ENCODE measurements at regions of chr6 and their contacts with region 1.

Region 1: DNA sequence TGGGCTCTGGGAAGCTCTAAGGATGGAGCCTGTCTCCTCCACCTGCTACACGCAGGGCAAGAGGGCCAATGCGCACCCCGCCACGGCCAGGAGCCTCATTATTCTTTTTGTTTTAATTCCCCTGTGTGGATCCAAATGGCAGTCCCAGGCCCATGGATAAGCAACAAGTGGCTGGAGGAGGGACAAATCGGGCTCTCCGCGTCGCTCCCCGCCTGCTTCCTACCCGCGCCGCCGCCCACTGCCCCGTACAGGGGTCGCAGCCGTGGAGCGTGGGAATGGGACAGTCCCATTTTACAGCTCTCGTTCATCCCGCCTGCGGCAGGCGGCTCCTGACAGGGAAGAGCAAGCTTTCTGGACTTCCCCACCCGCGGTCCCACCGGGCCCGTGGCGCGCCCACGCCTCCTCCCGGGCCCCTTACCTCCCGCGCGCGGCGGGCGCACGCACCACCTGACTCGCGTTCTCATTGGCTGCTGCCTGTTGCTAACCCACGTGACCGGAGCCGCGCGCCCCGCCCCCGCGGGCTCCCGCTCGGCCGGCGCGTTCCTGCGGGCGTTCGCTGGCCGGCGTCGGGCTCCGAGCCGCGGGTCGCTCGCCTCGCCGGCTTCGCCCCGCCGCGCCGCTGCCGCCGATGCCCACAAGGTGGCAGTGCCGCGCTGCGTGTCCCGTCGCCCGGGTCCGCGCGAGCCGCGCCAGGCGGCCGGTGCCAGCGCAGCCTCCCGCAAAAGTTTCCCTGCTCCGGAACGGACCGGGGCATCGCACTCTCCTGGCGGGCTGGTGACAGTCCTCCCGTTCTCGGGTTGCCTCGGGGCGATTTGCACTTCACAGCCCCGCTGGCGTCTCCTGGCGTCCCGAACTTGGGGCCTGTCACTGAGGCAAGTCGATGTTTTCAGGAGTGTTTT is 93.3 kb downstream of the CD83 start:
- DNase-seq: peak; percentile 83
- H3K4me3 ChIP-seq: peak overlapping the region; percentile 63 to 81 (median 64)
- H3K27ac ChIP-seq: peak overlapping the region; percentile 72
- H3K4me1 ChIP-seq: peaks cover 21% of the 10 kb centered on the region
- H3K27me3 ChIP-seq: no peaks in the 10 kb centered on the region
- CTCF ChIP-seq: peak; percentile 42 to 55

Region 2: GRCh38 chr6:13863674-13864155 is 347.2 kb before region 1 on chr6:
- CTCF ChIA-PET with region 1: no interaction called
- dilution Hi-C with region 1: no loop called
- in situ Hi-C with region 1: no loop called
- intact Hi-C with region 1: no loop called
- DNase-seq: no peak
- H3K4me3 ChIP-seq: no peak overlapping the region
- H3K27ac ChIP-seq: no peak overlapping the region
- H3K4me1 ChIP-seq: peaks cover 6% of the 10 kb centered on the region
- H3K27me3 ChIP-seq: peaks cover 7% of the 10 kb centered on the region
- CTCF ChIP-seq: no peak

Region 3: GRCh38 chr6:14452567-14453527 is 241.9 kb after region 1 on chr6:
- CTCF ChIA-PET with region 1: no interaction called
- dilution Hi-C with region 1: no loop called
- in situ Hi-C with region 1: loop called in 1 of 2 experiments (anchors 25 kb)
- intact Hi-C with region 1: no loop called
- DNase-seq: no peak
- H3K4me3 ChIP-seq: no peak overlapping the region
- H3K27ac ChIP-seq: no peak overlapping the region
- H3K4me1 ChIP-seq: peaks cover 8% of the 10 kb centered on the region
- H3K27me3 ChIP-seq: no peaks in the 10 kb centered on the region
- CTCF ChIP-seq: no peak

Region 4: GRCh38 chr6:14711056-14711703 is 500.3 kb after region 1 on chr6:
- CTCF ChIA-PET with region 1: no interaction called
- dilution Hi-C with region 1: no loop called
- in situ Hi-C with region 1: loop called in 1 of 2 experiments (anchors 10 kb)
- intact Hi-C with region 1: loop called (anchors 1 kb)
- DNase-seq: peak; percentile 78
- H3K4me3 ChIP-seq: no peak overlapping the region
- H3K27ac ChIP-seq: peak overlapping the region; percentile 67
- H3K4me1 ChIP-seq: peaks cover 49% of the 10 kb centered on the region
- H3K27me3 ChIP-seq: no peaks in the 10 kb centered on the region
- CTCF ChIP-seq: peak; percentile 70 to 86

Region 5: GRCh38 chr6:14799928-14800327 is 589.0 kb after region 1 on chr6:
- CTCF ChIA-PET with region 1: no interaction called
- dilution Hi-C with region 1: no loop called
- in situ Hi-C with region 1: no loop called
- intact Hi-C with region 1: loop called (anchors 5 kb)
- DNase-seq: peak; percentile 71
- H3K4me3 ChIP-seq: no peak overlapping the region
- H3K27ac ChIP-seq: no peak overlapping the region
- H3K4me1 ChIP-seq: peaks cover 17% of the 10 kb centered on the region
- H3K27me3 ChIP-seq: no peaks in the 10 kb centered on the region
- CTCF ChIP-seq: no peak

Region 6: DNA sequence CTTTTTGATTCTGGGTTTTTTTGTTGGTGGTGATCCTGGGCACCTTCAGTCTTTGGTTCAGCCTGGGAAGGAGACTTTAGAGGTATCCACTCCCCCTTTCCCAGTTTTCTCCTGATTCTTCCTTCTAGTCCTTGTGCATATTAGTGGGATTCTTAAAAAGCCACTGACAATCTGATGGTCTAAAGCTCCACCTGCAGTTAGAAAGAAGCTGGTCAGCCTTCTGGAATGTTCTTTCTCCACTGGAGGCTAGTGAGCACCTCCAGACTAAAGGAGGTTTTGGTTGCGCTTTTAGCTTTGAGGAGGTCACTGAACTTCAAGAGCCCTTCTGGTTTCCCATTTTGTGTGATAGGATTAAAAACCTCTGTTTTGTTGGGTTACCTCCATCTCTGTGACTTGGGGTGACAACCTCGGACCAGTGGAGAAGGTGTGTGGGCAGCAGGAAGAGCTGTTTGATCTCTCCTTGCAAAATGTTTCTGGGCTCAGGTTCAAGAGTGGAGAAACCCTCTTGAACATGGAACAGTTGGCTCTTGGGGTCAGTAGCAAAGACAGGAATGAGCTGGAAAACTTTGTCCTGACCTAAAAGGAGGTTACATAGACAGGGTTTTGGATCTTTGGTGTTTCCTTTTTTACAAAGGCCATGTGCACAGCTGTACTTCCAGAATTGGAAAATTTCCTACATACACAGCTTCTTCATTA is 1063.9 kb after region 1 on chr6:
- CTCF ChIA-PET with region 1: no interaction called
- dilution Hi-C with region 1: no loop called
- in situ Hi-C with region 1: no loop called
- intact Hi-C with region 1: loop called (anchors 2 kb)
- DNase-seq: no peak
- H3K4me3 ChIP-seq: no peak overlapping the region
- H3K27ac ChIP-seq: no peak overlapping the region
- H3K4me1 ChIP-seq: peaks cover 5% of the 10 kb centered on the region
- H3K27me3 ChIP-seq: no peaks in the 10 kb centered on the region
- CTCF ChIP-seq: peak in 1 of 2 donors; percentile 35

Region 7: GRCh38 chr6:15491255-15491985 is 1280.5 kb after region 1 on chr6:
- CTCF ChIA-PET with region 1: no interaction called
- dilution Hi-C with region 1: no loop called
- in situ Hi-C with region 1: loop called (anchors 25 kb)
- intact Hi-C with region 1: no loop called
- DNase-seq: peak; percentile 29
- H3K4me3 ChIP-seq: no peak overlapping the region
- H3K27ac ChIP-seq: no peak overlapping the region
- H3K4me1 ChIP-seq: no peaks in the 10 kb centered on the region
- H3K27me3 ChIP-seq: no peaks in the 10 kb centered on the region
- CTCF ChIP-seq: peak; percentile 91 to 94

Measured in mammary epithelial cell (primary cell).